KBM-7 (cell line): ENCODE measurements at regions of chr5 and their contacts with region 1.

Region 1: GRCh38 chr5:150340614-150341255 is 16.8 kb upstream of the TCOF1 start:
- DNase-seq: peak; percentile 29

Region 2: DNA sequence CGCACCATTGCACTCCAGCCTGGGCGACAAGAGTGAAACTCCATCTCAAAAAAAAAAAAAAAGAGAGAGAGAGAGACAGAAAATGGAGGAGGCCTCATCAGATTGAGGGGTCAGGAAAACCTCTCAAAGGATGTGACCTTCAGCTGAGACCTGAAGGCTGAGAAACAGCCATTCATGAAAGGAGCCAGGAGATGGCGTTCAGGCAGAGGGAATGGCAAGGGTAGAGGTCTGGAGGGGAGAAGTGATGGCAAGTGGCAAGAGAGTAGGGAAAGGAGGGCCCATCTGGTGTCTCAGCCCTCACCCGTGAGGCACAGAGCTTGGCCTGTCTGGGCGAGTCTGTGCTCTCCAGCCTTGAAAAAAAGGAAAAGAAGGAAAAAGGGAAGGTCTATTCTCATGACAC is 68.2 kb before region 1 on chr5:
- in situ Hi-C with region 1: loop called (anchors 10 kb)
- DNase-seq: peak; percentile 67